ENCODE measurements at regions of chr6 and their contacts with region 1.

Region 1: DNA sequence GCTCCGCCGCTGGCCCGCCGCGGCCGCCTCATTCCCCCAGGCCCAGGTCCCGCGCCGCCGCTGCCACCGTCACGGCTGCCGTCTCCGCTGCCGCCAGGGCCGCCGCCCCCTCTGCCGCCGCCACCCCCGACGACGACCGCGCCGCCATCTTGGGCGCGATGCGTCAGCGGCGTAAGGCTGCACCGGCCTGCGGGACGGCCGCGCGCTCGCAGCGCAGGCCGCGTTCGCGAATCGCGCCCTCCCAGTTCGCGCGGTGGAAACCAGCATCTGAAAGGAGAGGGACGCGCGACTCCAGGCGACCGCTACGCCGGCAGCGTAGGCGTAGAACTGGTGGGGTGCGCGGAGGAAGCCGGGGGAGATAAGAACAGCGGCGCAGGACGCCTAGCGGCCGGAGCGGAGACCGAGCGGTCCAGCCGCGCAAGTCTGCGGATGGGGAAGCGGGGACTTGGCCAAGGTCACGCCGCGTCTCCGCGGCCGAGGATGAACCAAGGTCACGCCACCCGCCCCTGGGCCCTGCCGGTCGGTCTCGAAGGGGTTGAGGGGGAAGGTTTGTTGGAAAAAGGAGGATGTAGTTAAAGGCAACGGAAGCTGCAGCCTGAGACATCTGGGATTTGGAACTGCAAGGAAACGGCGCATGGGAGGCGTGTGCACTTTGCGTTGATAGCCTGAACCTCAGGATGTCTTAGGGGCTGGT is at the start of gene NUDT3:
- DNase-seq: peak; percentile 93
- H3K4me3 Mint-ChIP-seq: peak within 1 kb of the TSS; percentile 97
- H3K27ac Mint-ChIP-seq: peak within 1 kb of the TSS; percentile 88
- H3K4me1 Mint-ChIP-seq: peaks cover 18% of the 10 kb centered on the region
- H3K27me3 Mint-ChIP-seq: peaks cover 3% of the 10 kb centered on the region
- total RNA-seq, gene NUDT3: 20.0 and 20.8 TPM in 2 replicates

Region 2: DNA sequence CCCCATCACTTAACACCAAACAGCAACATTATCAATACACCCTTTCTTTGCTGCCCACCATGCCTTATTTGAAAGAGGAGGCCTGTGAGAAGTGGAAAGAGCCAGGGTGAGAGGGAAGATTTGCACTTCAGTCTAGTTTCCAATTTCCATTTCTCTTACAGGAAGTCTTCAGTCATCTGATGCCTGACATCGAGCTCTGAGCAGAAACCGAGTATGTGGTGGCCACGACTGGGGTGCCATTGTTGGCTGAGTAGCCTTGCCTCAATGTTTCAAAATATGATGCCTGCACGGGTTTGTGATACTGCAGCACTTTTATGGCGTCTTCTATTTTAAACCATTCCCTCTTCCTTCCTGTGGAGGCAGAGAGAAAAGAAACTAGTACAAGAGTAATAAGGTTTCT is 104.1 kb before region 1 on chr6:
- intact Hi-C with region 1: loop called (anchors 1 kb)
- DNase-seq: peak; percentile 16
- H3K4me3 Mint-ChIP-seq: no peak overlapping the region
- H3K27ac Mint-ChIP-seq: peak overlapping the region; percentile 79
- H3K4me1 Mint-ChIP-seq: peaks cover 26% of the 10 kb centered on the region
- H3K27me3 Mint-ChIP-seq: no peaks in the 10 kb centered on the region

Region 3: GRCh38 chr6:34425498-34426410 is 33.1 kb after region 1 on chr6 and contains the start of gene RPS10:
- intact Hi-C with region 1: loop called (anchors 1 kb)
- DNase-seq: peak; percentile 88
- H3K4me3 Mint-ChIP-seq: peak within 1 kb of the TSS; percentile 99
- H3K27ac Mint-ChIP-seq: peak within 1 kb of the TSS; percentile 99
- H3K4me1 Mint-ChIP-seq: peaks cover 31% of the 10 kb centered on the region
- H3K27me3 Mint-ChIP-seq: peaks cover 4% of the 10 kb centered on the region
- total RNA-seq, gene RPS10: 1,492 and 1,525 TPM in 2 replicates

Measured in activated T-helper 1 cell treated with anti-CD3 and anti-CD28 coated beads, Interleukin-12 subunit alpha, Interleukin-12 subunit beta, Interleukin-2, Interleukin-4 antibody, amounts not matched to agents 30 ng/mL and 10 ng/mL and 1 ng/mL, durations not matched to agents 14 hours and 24 hours and 36 hours (primary cell).